GM10248 (cell line): ENCODE measurements at regions of chr18 and their contacts with region 1.

Region 1: DNA sequence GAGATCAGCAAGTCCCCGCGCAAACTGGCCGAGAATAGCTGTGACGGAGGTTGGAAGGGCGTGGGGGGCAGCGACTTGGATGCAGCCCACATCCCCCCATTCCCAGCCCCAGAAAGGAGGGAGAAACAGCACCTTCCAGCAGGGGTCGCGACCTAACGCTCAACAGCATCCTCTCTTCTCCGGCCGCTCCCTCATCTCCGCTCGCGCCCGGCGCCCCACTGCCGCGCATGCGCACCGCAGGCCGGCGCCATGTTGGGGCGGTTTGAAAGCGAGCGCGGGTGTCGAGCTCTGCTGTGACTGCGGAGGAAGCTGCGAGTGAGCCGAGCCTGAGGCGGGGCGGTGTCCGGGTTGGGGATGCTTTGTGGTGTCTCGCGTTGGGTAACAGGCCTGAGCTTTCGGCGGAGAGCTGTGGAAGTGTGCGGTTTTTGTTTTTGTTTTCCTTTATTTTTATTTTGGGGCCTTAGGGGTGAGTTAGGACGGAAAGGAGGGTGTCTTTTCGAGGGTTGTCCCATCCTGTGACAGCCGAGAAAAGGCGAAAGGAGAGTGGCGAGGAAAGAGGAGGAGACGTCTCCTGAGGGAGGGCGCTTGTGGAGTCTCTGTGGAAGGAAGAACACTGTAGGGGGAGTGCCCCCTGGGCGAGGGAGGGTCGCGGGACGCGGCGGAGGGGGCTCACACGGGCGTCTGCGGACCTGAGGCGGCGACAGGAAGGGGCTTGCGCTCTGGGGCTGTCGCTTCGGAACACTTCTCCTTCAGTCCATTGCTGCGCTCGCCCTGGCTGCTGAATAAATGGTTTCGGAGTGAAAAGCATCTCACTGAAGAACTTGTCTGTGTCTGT is at the starts of genes C18orf54 and STARD6:
- DNase-seq: peak; percentile 97
- CTCF ChIP-seq: peak; percentile 61

Region 2: GRCh38 chr18:54335638-54336173 is 22.2 kb before region 1 on chr18:
- CTCF ChIA-PET with region 1: interaction called, 13 read pairs
- POLR2A ChIA-PET with region 1: no interaction called
- DNase-seq: no peak
- CTCF ChIP-seq: no peak